ENCODE measurements at regions of chr17 and their contacts with region 1.

Region 1: GRCh38 chr17:76408052-76408849 is 23.8 kb downstream of the SPHK1 start:
- H3K4me3 ChIP-seq: no peak overlapping the region
- H3K27ac ChIP-seq: no peak overlapping the region
- H3K4me1 ChIP-seq: peaks cover 10% of the 10 kb centered on the region
- CTCF ChIP-seq: peak; percentile 59

Region 2: DNA sequence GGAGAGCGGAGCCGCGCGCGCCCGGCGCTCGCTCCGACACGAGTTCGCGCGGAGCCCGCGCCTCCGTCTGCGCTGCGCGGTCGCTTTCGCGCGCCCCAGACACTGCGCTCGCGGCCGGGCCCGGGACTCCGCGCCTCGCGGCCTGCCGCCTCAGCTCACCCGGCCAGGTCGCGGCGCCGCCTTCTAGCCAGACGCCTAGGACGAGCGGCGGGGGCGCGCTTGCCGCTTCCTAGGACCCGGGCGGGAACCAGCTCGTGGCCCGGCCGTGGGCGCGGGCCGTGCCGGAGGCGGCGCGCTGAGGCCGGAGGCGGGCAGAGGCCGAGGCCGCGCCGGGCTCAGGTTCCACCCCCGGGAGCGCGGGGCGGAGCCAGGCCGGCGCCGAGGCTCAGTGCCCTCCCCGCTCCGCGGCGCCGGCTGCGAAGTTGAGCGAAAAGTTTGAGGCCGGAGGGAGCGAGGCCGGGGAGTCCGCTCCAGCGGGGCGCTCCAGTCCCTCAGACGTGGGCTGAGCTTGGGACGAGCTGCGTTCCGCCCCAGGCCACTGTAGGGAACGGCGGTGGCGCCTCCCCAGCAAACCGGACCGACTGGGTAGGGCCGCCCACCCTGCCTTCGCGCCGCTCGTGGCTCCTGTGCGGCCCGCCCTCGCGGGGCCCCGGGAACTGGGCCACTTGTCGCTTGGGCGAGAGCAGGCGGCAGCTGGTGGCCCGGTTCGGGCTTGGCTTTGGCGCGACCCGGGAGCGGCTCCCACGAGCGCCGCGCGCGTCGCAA is 23.8 kb before region 1 on chr17 and contains the start of gene SPHK1:
- CTCF ChIA-PET with region 1: interaction called, 14 read pairs
- POLR2A ChIA-PET with region 1: no interaction called
- H3K4me3 ChIP-seq: peak within 1 kb of the TSS; percentile 54
- H3K27ac ChIP-seq: peak within 1 kb of the TSS; percentile 77; the same call in 1 of the 2 replicates
- H3K4me1 ChIP-seq: peaks cover 8% of the 10 kb centered on the region; the same call in 1 of the 2 replicates
- CTCF ChIP-seq: peak; percentile 36; the same call in 1 of the 2 replicates

Region 3: DNA sequence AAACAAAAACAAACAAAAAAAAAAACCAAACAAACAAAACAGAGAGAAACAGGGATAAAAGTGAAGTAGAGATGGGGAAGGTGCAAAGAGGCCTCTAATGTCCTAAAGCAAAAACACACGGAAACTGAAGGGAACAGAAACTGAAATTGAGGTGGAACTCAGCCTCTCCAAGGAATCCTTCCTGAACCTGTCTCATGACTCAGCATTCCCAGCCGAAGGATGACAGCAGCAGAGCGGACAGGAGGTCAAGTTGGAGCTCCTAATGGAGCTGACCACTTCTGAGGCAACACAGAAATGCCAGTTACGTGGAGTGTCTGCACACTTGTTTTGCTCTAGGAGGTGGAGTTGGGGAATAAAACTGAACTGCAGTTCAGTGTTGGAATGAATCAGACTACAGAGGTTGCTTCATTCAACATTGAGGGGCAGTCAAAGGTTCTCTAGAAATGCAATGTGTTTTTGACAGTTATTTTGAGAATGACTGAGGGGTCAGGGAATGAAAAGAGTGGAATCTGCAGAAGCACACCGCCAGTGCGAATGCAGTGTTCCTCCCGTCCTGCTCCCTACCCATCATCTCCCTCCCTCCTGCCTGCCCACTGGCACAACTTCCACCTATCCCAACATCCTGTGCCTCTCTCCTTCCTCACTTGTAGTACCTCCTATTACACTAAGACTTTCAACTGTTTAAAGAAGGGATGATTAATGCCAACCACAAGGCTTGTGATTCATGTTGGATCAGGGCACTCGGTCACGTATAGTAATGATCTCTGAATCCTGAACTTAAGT is 38.4 kb after region 1 on chr17:
- CTCF ChIA-PET with region 1: interaction called, 12 read pairs
- POLR2A ChIA-PET with region 1: no interaction called
- H3K4me3 ChIP-seq: no peak overlapping the region
- H3K27ac ChIP-seq: no peak overlapping the region
- H3K4me1 ChIP-seq: peaks cover 40% of the 10 kb centered on the region
- CTCF ChIP-seq: no peak

Region 4: DNA sequence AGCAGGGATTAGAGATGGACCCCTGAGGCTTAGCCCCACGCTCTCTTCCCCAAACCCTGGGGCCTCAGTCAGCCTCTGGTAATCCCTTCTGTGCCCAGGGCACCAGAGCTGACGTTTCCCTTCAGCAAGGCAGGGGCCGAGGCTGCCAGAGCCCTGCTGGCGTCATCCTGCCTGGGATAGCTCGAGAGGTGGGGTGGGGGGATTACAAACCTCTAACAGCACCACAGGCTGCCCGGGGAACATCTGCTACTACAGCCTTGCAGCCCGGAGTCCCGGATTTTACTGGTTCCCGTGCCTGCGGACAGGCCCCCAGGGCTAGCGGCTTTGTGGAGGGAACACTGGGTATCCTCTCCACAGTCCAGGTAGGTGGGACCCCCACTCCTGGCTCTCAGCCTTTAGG is 59.1 kb after region 1 on chr17 and contains the start of gene AANAT:
- CTCF ChIA-PET with region 1: interaction called, 14 read pairs
- POLR2A ChIA-PET with region 1: no interaction called
- H3K4me3 ChIP-seq: no peak within 1 kb of the TSS
- H3K27ac ChIP-seq: no peak within 1 kb of the TSS
- H3K4me1 ChIP-seq: no peaks in the 10 kb centered on the region
- CTCF ChIP-seq: no peak

Region 5: DNA sequence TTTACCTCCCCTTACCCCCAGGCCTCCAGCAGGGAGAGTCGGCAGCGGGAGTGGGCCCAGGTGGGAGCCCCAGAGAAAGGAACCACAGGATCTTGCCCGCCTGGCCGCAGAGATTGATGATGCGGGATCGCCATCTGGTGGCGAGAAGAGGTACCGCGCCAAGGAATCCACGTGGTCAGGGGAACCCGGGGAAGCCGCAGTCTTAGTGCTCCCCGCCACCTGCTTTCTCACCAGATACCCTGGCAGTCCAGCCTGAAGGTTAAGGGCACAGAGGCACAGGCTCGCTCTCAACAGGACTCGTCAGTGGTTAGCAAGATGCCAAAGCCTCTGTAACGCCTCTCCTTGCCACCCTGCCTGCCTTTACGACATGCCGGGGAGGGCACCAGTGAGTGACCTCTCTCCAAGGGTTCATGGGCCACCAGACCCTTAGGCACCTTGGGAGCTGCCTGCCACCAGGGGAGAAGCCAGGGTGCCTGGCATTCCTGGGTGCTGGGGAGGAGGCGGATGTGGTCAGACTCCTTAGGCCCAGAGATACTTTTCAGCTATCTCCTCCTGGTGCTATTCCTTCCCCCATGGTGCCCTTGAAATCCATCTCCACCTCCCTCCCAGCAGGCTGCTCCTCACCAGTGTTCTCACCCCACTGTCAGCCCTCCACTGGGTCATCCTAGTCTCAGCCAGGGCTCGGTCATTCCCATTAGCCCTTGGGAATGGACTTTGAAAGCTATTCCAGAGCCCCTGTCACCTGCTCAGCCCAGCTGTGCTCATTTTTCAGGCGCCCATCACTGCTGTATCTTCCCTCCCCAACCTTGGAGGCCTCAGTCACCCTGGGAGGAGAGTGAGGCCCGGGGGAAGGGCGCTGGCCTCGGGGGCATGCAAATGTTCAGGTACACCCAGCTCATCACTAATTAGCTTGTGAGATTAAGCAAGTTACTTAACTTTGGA is 98.4 kb after region 1 on chr17:
- CTCF ChIA-PET with region 1: interaction called, 22 read pairs
- POLR2A ChIA-PET with region 1: no interaction called
- H3K4me3 ChIP-seq: no peak overlapping the region
- H3K27ac ChIP-seq: no peak overlapping the region
- H3K4me1 ChIP-seq: peaks cover 3% of the 10 kb centered on the region; the same call in 1 of the 2 replicates
- CTCF ChIP-seq: peak; percentile 95